AG04449 (cell line): ENCODE measurements at regions of chr7 and their contacts with region 1.

Region 1: DNA sequence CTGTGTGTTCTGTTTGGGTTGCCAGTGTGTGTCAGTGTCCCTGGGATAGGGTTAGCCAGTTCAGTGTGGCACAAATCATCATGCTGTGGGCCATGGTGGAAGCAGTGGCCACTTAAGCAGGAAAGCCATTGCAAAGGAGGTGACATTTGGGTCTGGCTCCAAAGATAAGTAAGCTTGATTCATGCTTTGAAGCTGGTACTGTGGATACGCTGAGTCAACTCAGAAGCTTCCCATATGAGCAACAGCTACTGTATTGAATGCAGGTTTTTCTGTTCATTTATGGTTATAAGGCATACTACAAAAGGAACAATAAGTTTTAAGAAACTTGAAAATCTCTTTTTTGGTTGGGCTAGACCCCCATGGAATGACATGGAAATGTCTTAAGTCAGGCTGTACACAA is 143.1 kb downstream of the BMPER start:
- DNase-seq: no peak
- H3K4me3 ChIP-seq: no peak overlapping the region
- CTCF ChIP-seq: no peak

Region 2: DNA sequence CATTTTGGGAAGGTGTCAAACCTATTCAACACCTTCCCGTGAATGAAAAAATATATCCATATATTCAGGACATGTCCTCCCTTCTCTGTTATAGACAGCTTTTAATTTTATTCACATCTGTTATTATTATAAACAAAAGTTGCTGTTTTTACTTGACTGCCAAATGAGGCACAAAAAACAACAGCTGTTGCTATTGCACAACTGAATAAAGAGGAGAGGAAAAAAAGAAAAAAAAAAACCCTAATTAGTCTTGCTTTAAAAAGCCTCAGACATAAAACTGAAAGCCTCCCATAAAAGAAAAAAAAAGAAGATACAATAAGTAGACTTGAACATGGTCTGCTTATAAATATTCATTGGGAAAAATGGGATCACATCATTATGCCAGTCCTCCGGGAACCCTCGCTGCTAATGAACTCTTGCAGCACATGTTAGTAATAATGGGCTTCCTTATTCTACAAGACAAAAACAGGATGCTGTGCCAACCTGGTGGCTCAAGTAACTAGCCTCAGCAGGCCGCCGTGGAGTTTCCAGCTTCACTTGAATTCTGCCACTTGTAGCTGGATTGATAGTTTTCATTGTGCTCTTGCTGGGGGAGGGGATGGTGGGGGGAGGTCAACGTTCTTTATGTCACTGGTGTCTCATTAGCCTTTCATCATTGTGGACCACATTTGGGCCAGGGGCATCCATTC is 10.5 kb after region 1 on chr7:
- CTCF ChIA-PET with region 1: interaction called, 10 read pairs
- POLR2A ChIA-PET with region 1: interaction called, 3 read pairs
- DNase-seq: no peak
- H3K4me3 ChIP-seq: no peak overlapping the region
- CTCF ChIP-seq: no peak